ENCODE measurements at regions of chr7 and their contacts with region 1.

Region 1: GRCh38 chr7:23181684-23182553 is at the start of gene NUP42:
- DNase-seq: peak; percentile 99
- H3K4me3 Mint-ChIP-seq: peak within 1 kb of the TSS; percentile 87
- H3K27ac Mint-ChIP-seq: peak within 1 kb of the TSS; percentile 95
- H3K4me1 Mint-ChIP-seq: peaks cover 31% of the 10 kb centered on the region
- H3K27me3 Mint-ChIP-seq: no peaks in the 10 kb centered on the region
- total RNA-seq, gene NUP42: 24.1 to 31.7 TPM

Region 2: GRCh38 chr7:22822486-22823141 is 359.3 kb before region 1 on chr7 and contains the start of gene TOMM7:
- CTCF ChIA-PET with region 1: no interaction called
- POLR2A ChIA-PET with region 1: no interaction called
- intact Hi-C with region 1: loop called (anchors 1 kb)
- DNase-seq: peak; percentile 92
- H3K4me3 Mint-ChIP-seq: peak within 1 kb of the TSS; percentile 96
- H3K27ac Mint-ChIP-seq: peak within 1 kb of the TSS; percentile 90
- H3K4me1 Mint-ChIP-seq: peaks cover 34% of the 10 kb centered on the region
- H3K27me3 Mint-ChIP-seq: peaks cover 11% of the 10 kb centered on the region
- total RNA-seq, gene TOMM7: 277 to 279 TPM

Region 3: DNA sequence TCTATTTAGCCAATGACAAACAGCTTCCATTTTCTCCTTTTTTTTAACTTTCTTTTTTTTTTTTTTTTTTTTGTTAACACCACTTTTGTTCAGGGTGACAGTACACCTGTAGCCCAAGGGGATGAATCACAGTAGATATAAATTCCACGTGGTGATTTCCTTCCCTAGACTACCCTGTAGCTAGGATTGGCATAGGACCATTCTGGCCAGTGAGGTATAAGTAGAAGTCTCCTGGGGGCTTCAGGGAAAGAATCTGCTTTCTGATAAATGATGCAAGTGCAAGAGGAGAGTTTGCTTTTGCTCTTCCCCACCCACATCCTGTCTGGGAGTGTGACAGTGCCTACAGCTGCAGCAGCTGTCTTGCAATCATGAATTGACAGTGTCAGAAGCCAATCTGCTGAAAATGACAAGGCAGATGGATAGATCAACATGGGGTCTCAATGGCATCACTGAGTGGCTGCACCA is 296.1 kb before region 1 on chr7:
- CTCF ChIA-PET with region 1: no interaction called
- POLR2A ChIA-PET with region 1: interaction called, 4 read pairs
- intact Hi-C with region 1: loop called (anchors 10 kb)
- DNase-seq: peak; percentile 81
- H3K4me3 Mint-ChIP-seq: peak overlapping the region; percentile 45
- H3K27ac Mint-ChIP-seq: peak overlapping the region; percentile 88
- H3K4me1 Mint-ChIP-seq: peaks cover 39% of the 10 kb centered on the region
- H3K27me3 Mint-ChIP-seq: no peaks in the 10 kb centered on the region

Region 4: DNA sequence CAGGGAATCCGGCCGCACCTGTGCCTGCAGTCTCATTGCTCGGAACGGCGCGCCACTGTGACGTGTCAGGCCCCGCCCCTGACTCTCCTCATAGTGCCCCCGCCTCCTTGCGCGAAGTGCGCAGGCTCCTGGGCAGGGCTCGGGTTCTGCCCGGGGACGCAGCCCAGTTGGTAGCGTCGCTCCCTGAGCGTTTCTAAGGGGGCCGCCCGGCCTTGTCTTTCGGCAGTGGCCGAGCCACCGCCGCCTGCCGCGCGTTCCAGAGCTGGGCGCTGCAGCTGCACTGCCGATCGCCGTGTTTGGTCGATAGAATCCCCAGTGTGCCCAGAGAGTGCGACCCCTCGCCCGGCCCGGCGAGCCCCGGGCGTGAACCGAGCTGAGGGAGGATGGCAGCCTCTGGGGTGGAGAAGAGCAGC is 76.3 kb before region 1 on chr7 and contains the start of gene KLHL7:
- CTCF ChIA-PET with region 1: interaction called, 13 read pairs
- POLR2A ChIA-PET with region 1: interaction called, 11 read pairs
- intact Hi-C with region 1: loop called (anchors 1 kb)
- DNase-seq: peak; percentile 97
- H3K4me3 Mint-ChIP-seq: peak within 1 kb of the TSS; percentile 98
- H3K27ac Mint-ChIP-seq: peak within 1 kb of the TSS; percentile 88
- H3K4me1 Mint-ChIP-seq: peaks cover 41% of the 10 kb centered on the region
- H3K27me3 Mint-ChIP-seq: no peaks in the 10 kb centered on the region
- total RNA-seq, gene KLHL7: 24.3 to 24.8 TPM

Region 5: GRCh38 chr7:23216021-23216420 is 34.1 kb after region 1 on chr7:
- CTCF ChIA-PET with region 1: no interaction called
- POLR2A ChIA-PET with region 1: no interaction called
- intact Hi-C with region 1: no loop called
- DNase-seq: no peak
- H3K4me3 Mint-ChIP-seq: no peak overlapping the region
- H3K27ac Mint-ChIP-seq: no peak overlapping the region
- H3K4me1 Mint-ChIP-seq: no peaks in the 10 kb centered on the region
- H3K27me3 Mint-ChIP-seq: peaks cover 1% of the 10 kb centered on the region

Region 6: DNA sequence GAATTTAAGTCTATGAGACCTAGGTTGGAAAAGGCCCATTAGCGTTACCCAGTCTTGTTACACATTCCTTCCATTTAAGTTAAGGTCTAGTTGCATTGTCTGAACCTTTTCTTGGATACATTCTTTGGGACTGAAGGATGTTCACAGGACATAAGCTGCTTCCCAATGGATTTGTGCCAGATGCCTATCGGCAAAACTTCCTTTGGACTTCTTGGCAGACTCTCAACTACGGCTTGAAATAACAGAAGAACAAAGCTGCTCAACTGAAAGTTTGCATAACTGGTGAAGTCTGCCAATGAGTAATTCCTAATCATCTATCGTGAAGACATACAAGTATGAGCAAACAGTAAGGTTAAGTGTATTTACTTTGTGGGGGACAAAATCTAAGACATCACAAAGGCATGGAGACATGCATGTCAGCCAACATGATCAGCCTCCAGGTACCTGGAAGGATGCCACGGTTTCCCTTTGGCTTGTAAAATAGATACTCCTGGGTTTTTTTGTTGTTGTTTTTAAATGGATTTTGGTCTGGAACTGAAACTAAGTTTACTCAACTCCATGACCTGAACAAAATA is 152.7 kb after region 1 on chr7:
- CTCF ChIA-PET with region 1: no interaction called
- POLR2A ChIA-PET with region 1: no interaction called
- intact Hi-C with region 1: no loop called
- DNase-seq: no peak
- H3K4me3 Mint-ChIP-seq: no peak overlapping the region
- H3K27ac Mint-ChIP-seq: no peak overlapping the region
- H3K4me1 Mint-ChIP-seq: no peaks in the 10 kb centered on the region
- H3K27me3 Mint-ChIP-seq: peaks cover 14% of the 10 kb centered on the region

Region 7: DNA sequence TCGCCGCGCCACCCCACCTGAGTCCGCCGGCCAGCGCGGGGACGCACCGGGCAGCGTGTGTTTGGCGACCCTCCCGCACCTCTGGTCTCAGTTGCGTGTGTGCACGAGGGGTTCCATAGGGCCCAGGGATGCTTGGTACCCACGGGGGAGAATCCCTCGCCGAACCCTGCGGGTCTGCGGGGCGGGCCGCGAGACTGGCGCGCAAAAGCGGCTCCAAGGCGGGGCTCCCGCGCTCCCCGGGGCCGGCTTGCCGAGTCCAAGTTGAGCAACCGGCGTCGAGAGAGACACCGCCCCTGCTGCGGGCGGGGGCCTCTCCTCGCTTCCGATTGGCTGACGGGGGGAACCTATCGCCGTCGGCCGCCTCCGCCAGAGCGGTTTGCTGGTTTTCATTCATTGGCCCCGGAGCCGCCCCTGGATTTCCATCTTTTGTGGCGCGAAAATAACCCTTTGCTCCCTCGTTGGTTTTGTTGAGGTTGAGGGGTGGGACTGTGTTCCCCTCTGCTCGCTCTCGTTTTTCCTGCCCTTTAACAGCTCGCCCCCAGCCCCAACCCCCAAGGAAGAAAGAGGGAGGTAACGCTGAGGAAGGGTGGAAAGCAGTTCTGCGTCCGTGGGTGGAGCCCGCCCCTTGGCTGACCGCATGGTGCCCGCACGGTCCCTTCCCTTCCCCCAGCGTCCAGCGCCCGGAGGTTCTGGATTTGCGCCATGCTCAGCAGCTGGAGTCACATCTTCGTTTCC is 292.3 kb after region 1 on chr7:
- CTCF ChIA-PET with region 1: no interaction called
- POLR2A ChIA-PET with region 1: no interaction called
- intact Hi-C with region 1: loop called (anchors 2 kb)
- DNase-seq: peak; percentile 91
- H3K4me3 Mint-ChIP-seq: peak overlapping the region; percentile 63
- H3K27ac Mint-ChIP-seq: peak overlapping the region; percentile 42
- H3K4me1 Mint-ChIP-seq: peaks cover 27% of the 10 kb centered on the region
- H3K27me3 Mint-ChIP-seq: peaks cover 60% of the 10 kb centered on the region

Region 8: DNA sequence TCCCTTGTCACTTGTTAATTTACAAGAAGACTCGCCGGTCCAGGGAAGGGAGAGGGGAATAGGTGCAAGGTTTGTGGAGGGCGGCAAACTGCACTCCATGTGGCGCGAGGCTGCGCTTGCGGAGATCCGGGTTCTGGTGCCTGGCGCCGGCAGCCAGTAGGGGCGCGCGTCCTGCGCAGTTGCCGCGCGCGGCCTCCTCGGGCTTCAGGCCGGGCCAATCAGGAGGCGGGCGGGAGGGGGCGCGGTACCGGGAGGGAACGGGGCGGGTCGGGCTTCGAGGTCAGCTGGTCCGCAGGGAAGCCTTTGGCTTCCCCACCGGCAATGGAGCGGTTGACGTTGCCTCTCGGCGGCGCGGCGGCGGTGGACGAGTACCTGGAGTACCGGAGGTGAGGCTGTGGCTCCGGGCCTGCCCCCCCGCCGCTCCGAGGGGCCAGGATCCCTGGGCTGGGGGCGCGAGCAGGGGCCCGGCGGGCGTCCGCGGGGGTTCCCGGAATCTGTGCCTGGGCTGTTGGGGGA is 498.0 kb after region 1 on chr7 and contains the start of gene FAM221A:
- CTCF ChIA-PET with region 1: no interaction called
- POLR2A ChIA-PET with region 1: no interaction called
- intact Hi-C with region 1: loop called (anchors 1 kb)
- DNase-seq: peak; percentile 90
- H3K4me3 Mint-ChIP-seq: peak within 1 kb of the TSS; percentile 84
- H3K27ac Mint-ChIP-seq: peak within 1 kb of the TSS; percentile 73
- H3K4me1 Mint-ChIP-seq: peaks cover 9% of the 10 kb centered on the region
- H3K27me3 Mint-ChIP-seq: peaks cover 5% of the 10 kb centered on the region
- total RNA-seq, gene FAM221A: 9.0 to 10.7 TPM